ENCODE measurements at regions of chr11 and their contacts with region 1.

Region 1: DNA sequence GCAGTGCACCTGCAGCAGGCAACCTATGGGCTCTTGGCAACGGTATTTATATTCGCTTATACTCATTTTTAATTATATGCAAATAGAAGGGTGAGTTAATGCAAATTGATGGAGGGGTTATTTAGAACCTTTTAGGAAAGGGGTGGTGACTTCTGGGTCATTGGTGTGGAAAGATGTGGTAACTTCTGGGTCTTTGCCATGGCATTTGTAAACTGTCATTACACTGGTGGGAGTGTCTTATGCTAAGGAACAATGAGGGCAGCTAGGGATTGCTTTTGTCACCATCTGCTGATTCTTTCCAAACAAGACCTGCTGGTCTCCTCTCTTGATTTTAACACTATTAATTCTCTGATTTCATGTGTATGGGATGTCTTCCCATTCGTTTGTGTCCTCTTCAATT is 11.7 kb upstream of the KAT5 start:
- DNase-seq: no peak
- ATAC-seq: peak; percentile 30 to 73 (median 44)
- H3K4me3 ChIP-seq: no peak overlapping the region
- H3K27ac ChIP-seq: no peak overlapping the region
- H3K4me1 ChIP-seq: peaks cover 0 to 9% (median 0%) of the 10 kb centered on the region in 4 donors
- H3K27me3 ChIP-seq: no peaks in the 10 kb centered on the region
- CTCF ChIP-seq: no peak
- POLR2A ChIP-seq: no peak

Region 2: GRCh38 chr11:65574109-65574810 is 126.1 kb before region 1 on chr11:
- intact Hi-C with region 1: no loop called
- DNase-seq: peak; percentile 90 to 96 (median 94)
- ATAC-seq: peak; percentile 41 to 65 (median 58)
- H3K4me3 ChIP-seq: peak overlapping the region; percentile 53 to 70 (median 55)
- H3K27ac ChIP-seq: peak overlapping the region; percentile 58 to 82 (median 68)
- H3K4me1 ChIP-seq: peaks cover 0 to 50% (median 16%) of the 10 kb centered on the region in 4 donors
- H3K27me3 ChIP-seq: no peaks in the 10 kb centered on the region
- CTCF ChIP-seq: peak; percentile 91 to 99 (median 99)
- POLR2A ChIP-seq: peak; percentile 26

Region 3: DNA sequence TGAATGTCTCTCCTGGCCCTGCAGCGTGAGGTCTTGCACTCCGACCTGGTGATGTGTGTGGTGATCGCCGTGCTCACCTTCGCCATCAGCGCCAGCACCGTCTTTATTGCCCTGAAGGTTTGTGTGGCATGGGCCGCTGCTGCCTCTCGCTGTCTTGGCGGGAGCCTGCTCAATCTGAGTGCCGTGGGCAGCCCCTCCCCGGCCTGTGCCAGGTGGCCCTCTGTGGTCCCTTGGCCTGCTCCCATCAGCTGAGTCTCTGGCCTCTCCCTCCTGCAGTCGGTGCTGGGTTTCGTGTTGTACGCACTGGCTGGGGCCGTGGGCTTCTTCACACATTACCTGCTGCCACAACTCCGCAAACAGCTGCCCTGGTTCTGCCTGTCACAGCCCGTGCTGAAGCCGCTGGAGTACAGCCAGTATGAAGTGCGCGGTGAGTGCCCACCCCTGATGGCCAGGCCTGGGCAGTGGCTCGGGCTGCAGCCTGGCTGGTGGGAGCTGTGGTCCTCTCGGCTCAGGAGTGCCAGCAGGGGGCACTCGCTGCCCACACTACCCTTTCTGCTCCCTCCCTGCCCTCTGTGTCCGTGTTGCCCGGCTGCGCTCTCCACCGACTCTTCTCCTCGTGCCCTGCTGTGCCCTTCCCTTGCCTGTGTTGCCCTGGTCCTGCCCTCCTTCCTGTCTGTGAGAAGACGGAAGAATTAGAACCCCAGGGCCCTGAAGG is 74.6 kb before region 1 on chr11:
- intact Hi-C with region 1: loop called in 1 of 2 experiments (anchors 10 kb)
- DNase-seq: peak in 2 of 3 donors; percentile 63 to 76
- ATAC-seq: peak; percentile 80 to 91 (median 87)
- H3K4me3 ChIP-seq: no peak overlapping the region
- H3K27ac ChIP-seq: no peak overlapping the region
- H3K4me1 ChIP-seq: no peaks in the 10 kb centered on the region
- H3K27me3 ChIP-seq: no peaks in the 10 kb centered on the region
- CTCF ChIP-seq: peak; percentile 68 to 77 (median 70)
- POLR2A ChIP-seq: no peak

Region 4: DNA sequence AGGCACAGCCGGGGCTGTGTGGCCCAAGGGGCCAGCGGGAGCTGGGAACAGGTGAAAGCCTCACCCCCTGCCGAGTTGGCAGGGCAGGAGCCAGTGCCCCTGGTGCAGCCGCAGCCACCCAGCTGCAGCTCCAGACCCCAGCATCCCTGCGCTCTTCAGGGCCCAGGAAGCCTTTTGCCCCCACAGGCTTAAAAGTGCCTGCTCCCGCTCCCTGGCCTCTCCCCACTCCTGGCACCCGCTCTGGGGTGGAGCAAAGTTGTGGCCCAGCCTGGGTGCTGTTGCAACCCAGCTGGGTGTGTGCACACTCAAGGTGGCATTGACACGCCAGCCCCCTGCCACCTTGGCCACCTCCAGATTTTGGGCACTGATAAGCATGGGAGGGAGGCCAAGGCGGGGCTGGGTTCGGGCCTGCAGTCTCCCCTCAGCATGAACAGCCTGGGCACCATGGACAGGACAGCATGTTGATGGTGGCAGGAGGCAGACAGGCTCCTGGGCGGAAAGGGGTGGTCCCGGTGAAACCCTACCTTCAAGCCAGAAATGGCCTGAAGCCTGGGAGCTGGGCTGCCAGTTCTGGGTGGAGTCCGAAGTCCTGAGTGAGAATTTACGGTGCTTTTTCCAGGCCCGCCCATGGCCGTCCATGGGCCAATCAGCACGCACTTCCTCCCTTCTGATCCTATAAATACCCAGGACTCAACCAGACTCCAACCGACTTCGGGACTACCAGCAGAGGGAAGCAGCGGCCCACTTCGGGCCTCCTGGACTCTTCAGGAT is 43.7 kb after region 1 on chr11:
- intact Hi-C with region 1: no loop called
- DNase-seq: no peak
- ATAC-seq: peak; percentile 65 to 88 (median 82)
- H3K4me3 ChIP-seq: no peak overlapping the region
- H3K27ac ChIP-seq: no peak overlapping the region
- H3K4me1 ChIP-seq: no peaks in the 10 kb centered on the region
- H3K27me3 ChIP-seq: no peaks in the 10 kb centered on the region
- CTCF ChIP-seq: peak; percentile 20 to 36 (median 30)
- POLR2A ChIP-seq: no peak

Region 5: GRCh38 chr11:65873318-65874156 is 173.1 kb after region 1 on chr11:
- intact Hi-C with region 1: no loop called
- DNase-seq: peak; percentile 95 to 97 (median 96)
- ATAC-seq: peak; percentile 96 to 98 (median 97)
- H3K4me3 ChIP-seq: peak overlapping the region; percentile 27 to 55 (median 45)
- H3K27ac ChIP-seq: peak overlapping the region; percentile 56 to 88 (median 69)
- H3K4me1 ChIP-seq: peaks cover 0 to 9% (median 0%) of the 10 kb centered on the region in 4 donors
- H3K27me3 ChIP-seq: no peaks in the 10 kb centered on the region
- CTCF ChIP-seq: no peak
- POLR2A ChIP-seq: peak; percentile 80